GM12878 (cell line): ENCODE measurements at regions of chr9 and their contacts with region 1.

Region 1: GRCh38 chr9:121059998-121060636 is 10.0 kb upstream of the C5 start:
- DNase-seq: no peak
- ATAC-seq: peak; percentile 80
- H3K4me3 ChIP-seq: no peak overlapping the region
- H3K27ac ChIP-seq: no peak overlapping the region
- H3K4me1 ChIP-seq: no peaks in the 10 kb centered on the region
- H3K27me3 ChIP-seq: no peaks in the 10 kb centered on the region
- CTCF ChIP-seq: peak; percentile 63 to 70 (median 68)
- EP300 ChIP-seq: no peak
- POLR2A ChIP-seq: no peak
- RAD21 ChIP-seq: peak; percentile 64

Region 2: DNA sequence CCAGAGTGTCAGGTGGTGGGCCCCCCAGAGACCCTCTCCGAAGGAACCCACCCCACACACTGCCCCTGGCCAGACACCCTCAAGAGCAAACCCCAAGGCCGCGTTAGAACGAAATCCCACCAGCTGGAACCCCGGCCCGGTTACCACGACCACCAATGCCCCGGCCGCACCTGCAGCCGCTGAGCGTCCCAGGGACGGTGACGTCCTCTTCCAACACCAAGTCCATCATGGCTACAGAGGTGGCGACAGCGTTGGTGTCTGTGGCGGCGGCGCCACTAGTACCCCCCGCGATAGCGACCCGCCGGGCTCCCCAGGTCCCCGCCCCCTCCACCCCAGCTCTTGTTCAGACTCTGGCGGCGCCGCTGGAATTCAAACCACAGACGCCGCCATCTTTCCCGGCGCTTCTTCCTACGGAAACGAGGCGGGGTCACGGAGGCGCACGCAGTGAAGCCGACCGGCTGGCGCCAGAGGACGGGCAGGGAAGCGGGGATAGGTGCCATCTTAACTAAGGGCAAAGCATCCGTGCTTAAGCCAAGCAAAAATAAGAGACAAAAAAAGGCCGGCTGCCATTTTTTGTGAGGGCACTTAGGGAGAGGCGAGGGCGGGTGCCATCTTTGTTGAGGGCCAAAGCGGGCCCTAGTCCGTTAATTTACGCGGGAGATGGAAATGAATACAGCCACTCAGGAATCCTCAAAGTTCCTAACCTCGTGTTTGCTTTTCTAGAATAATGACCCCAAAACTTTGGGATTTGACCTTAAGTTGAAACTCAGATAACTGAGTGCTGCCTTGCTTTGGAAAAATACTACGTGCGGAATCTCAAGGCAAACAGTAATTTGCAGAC is 480.1 kb before region 1 on chr9 and contains the start of gene CDK5RAP2:
- CTCF ChIA-PET with region 1: no interaction called
- POLR2A ChIA-PET with region 1: no interaction called
- RAD21 ChIA-PET with region 1: no interaction called
- SMC1A ChIA-PET with region 1: no interaction called
- in situ Hi-C with region 1: no loop called
- intact Hi-C with region 1: no loop called
- DNase-seq: peak; percentile 88
- ATAC-seq: peak; percentile 94
- H3K4me3 ChIP-seq: peak within 1 kb of the TSS; percentile 89
- H3K27ac ChIP-seq: peak within 1 kb of the TSS; percentile 85
- H3K4me1 ChIP-seq: peaks cover 20% of the 10 kb centered on the region
- H3K27me3 ChIP-seq: no peaks in the 10 kb centered on the region
- CTCF ChIP-seq: no peak
- EP300 ChIP-seq: 0 out of 4 replicates have a peak, but pooled peaks of 1 of the 2 experiments have one; percentile 31
- POLR2A ChIP-seq: peak; percentile 71
- RAD21 ChIP-seq: no peak
- polyA plus RNA-seq, gene CDK5RAP2: 16.2 to 16.8 TPM

Region 3: GRCh38 chr9:120742951-120743416 is 317.1 kb before region 1 on chr9:
- CTCF ChIA-PET with region 1: interaction called, 5 read pairs
- POLR2A ChIA-PET with region 1: no interaction called
- RAD21 ChIA-PET with region 1: interaction called, 3 read pairs
- SMC1A ChIA-PET with region 1: interaction called, 3 read pairs
- in situ Hi-C with region 1: no loop called
- intact Hi-C with region 1: loop called (anchors 5 kb)
- DNase-seq: no peak
- ATAC-seq: peak; percentile 93
- H3K4me3 ChIP-seq: no peak overlapping the region
- H3K27ac ChIP-seq: no peak overlapping the region
- H3K4me1 ChIP-seq: no peaks in the 10 kb centered on the region
- H3K27me3 ChIP-seq: no peaks in the 10 kb centered on the region
- CTCF ChIP-seq: peak; percentile 72 to 84 (median 82)
- EP300 ChIP-seq: no peak
- POLR2A ChIP-seq: no peak
- RAD21 ChIP-seq: peak; percentile 76

Region 4: DNA sequence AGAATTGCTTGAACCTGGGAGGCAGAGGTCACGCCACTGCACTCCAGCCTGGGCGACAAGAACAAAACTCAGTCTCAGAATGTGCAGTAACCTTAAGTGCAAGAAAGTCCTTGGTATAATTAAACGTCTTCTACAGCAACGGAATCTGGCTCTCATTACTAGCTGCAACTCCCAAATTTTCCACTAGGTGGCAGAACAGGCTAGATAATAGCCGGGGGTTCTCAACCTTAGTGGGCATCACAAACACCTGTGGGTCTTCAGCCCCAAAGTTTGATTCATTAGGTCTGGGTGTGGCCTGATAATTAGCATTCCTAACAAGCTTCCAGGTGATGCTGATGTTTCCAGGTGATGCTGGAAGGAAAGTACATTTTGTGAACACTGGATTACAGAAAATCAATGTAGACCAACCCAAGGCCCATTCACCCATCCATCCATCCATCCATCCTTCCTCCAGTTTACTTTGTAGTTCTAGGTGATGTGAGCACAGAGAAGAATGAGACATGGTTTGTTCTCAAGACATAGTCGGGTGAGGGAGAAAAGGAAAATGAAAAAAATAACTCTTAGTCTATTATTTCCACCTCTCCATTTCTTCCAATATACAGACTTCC is 304.2 kb before region 1 on chr9:
- CTCF ChIA-PET with region 1: interaction called, 109 read pairs
- POLR2A ChIA-PET with region 1: no interaction called
- RAD21 ChIA-PET with region 1: interaction called, 45 read pairs
- SMC1A ChIA-PET with region 1: interaction called, 73 read pairs
- in situ Hi-C with region 1: loop called (anchors 5 kb)
- intact Hi-C with region 1: loop called (anchors 1 kb)
- DNase-seq: peak; percentile 30
- ATAC-seq: peak; percentile 94
- H3K4me3 ChIP-seq: no peak overlapping the region
- H3K27ac ChIP-seq: no peak overlapping the region
- H3K4me1 ChIP-seq: peaks cover 9% of the 10 kb centered on the region
- H3K27me3 ChIP-seq: no peaks in the 10 kb centered on the region
- CTCF ChIP-seq: peak; percentile 65 to 88 (median 84); a peak in 5 of 6 replicates
- EP300 ChIP-seq: no peak
- POLR2A ChIP-seq: no peak
- RAD21 ChIP-seq: peak; percentile 96

Region 5: DNA sequence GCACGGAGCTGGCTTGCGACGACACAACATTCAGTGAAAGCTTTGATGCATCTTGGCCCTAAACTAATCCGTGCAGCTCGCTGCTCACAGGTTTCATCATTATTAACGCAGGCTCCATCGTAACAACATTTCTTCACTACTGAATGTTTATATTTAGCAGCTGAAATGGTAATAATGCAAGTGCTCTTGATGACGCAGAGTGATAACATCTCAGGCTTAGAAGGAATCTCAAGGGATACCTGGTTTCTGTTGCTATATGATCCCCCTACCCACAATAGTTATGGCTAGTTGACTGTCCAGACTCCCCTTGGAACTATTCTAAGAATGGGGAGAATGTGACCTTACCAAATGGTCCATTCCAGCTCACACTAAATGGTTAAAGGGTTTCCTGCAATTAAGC is 46.2 kb before region 1 on chr9:
- CTCF ChIA-PET with region 1: interaction called, 10 read pairs
- POLR2A ChIA-PET with region 1: no interaction called
- RAD21 ChIA-PET with region 1: no interaction called
- SMC1A ChIA-PET with region 1: interaction called, 4 read pairs
- in situ Hi-C with region 1: no loop called
- intact Hi-C with region 1: no loop called
- DNase-seq: no peak
- ATAC-seq: no peak
- H3K4me3 ChIP-seq: no peak overlapping the region
- H3K27ac ChIP-seq: no peak overlapping the region
- H3K4me1 ChIP-seq: peaks cover 4% of the 10 kb centered on the region
- H3K27me3 ChIP-seq: no peaks in the 10 kb centered on the region
- CTCF ChIP-seq: no peak
- EP300 ChIP-seq: no peak
- POLR2A ChIP-seq: no peak
- RAD21 ChIP-seq: no peak

Region 6: DNA sequence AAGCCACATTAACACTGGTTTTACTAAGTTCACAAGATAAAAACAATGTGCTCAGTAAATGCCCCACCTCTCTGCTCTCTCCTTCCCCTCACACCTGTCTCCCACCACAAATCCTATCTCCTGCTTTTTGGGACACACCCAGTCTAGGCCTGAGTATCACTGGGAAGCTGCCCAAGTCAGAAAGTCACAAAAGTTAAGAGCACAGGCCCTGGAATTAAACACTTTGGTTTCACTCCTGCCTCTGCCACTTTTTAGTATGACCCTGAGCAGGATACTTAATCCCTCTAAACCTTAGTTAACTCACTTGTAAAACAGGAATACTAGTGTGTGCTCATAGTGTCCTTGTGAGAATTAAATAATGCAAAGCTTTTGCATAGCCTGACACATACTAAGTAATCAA is 21.3 kb before region 1 on chr9:
- CTCF ChIA-PET with region 1: interaction called, 49 read pairs
- POLR2A ChIA-PET with region 1: no interaction called
- RAD21 ChIA-PET with region 1: interaction called, 3 read pairs
- SMC1A ChIA-PET with region 1: interaction called, 14 read pairs
- in situ Hi-C with region 1: no loop called
- intact Hi-C with region 1: no loop called
- DNase-seq: no peak
- ATAC-seq: no peak
- H3K4me3 ChIP-seq: no peak overlapping the region
- H3K27ac ChIP-seq: no peak overlapping the region
- H3K4me1 ChIP-seq: no peaks in the 10 kb centered on the region
- H3K27me3 ChIP-seq: no peaks in the 10 kb centered on the region
- CTCF ChIP-seq: no peak
- EP300 ChIP-seq: no peak
- POLR2A ChIP-seq: no peak
- RAD21 ChIP-seq: no peak

Region 7: DNA sequence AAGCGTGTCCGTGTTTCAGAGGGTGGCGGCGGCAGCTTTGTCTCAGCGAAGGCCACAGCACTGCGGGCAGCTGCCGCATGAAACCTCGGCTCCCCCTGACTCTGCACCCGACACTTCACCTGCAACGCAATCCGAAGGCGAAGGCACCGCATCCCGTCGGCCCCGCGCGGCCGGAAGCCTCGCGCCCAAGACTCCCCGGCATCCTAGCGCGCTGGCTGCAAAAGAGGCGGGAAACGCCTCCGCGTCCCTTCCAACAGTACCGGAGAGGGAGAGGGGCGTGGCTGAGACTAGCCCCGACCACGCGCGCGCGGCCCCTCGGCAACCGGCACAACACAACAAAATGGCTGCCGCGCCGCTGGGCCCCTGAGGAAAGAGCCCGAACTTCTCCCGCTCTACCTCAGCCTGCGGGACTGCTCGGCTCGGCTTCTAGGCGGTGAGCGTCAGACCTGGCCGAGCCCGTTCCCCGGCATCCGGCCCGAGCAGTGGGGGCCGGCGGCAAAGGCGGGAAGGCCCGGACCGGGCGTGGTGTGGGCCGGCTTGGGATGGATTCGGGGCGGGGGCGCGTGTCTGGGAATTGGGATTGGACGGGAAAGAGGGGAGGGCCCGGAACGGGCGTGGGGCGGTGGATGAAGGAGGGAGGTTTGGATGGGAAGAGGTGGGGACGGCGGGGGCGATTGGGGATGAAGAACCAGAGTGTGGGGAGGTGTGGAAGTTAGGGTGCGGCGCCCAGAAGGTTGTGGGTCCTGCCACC is 14.7 kb after region 1 on chr9 and contains the start of gene CNTRL:
- CTCF ChIA-PET with region 1: interaction called, 78 read pairs
- POLR2A ChIA-PET with region 1: no interaction called
- RAD21 ChIA-PET with region 1: interaction called, 8 read pairs
- SMC1A ChIA-PET with region 1: interaction called, 13 read pairs
- in situ Hi-C with region 1: no loop called
- intact Hi-C with region 1: no loop called
- DNase-seq: peak; percentile 62
- ATAC-seq: peak; percentile 84
- H3K4me3 ChIP-seq: peak within 1 kb of the TSS; percentile 91
- H3K27ac ChIP-seq: peak within 1 kb of the TSS; percentile 98
- H3K4me1 ChIP-seq: peaks cover 29% of the 10 kb centered on the region
- H3K27me3 ChIP-seq: no peaks in the 10 kb centered on the region
- CTCF ChIP-seq: no peak
- EP300 ChIP-seq: no peak
- POLR2A ChIP-seq: peak; percentile 93
- RAD21 ChIP-seq: no peak
- polyA plus RNA-seq, gene CNTRL: 20.0 to 22.0 TPM

Region 8: GRCh38 chr9:121121582-121122087 is 61.5 kb after region 1 on chr9:
- CTCF ChIA-PET with region 1: interaction called, 11 read pairs
- POLR2A ChIA-PET with region 1: no interaction called
- RAD21 ChIA-PET with region 1: interaction called, 6 read pairs
- SMC1A ChIA-PET with region 1: interaction called, 16 read pairs
- in situ Hi-C with region 1: no loop called
- intact Hi-C with region 1: no loop called
- DNase-seq: peak; percentile 87
- ATAC-seq: peak; percentile 100
- H3K4me3 ChIP-seq: peak overlapping the region; percentile 59
- H3K27ac ChIP-seq: peak overlapping the region; percentile 80
- H3K4me1 ChIP-seq: peaks cover 7% of the 10 kb centered on the region; the same call in 1 of the 2 replicates
- H3K27me3 ChIP-seq: no peaks in the 10 kb centered on the region
- CTCF ChIP-seq: peak in 1 of 3 experiments; percentile 15; a peak in 1 of 6 replicates
- EP300 ChIP-seq: no peak
- POLR2A ChIP-seq: peak; percentile 76
- RAD21 ChIP-seq: no peak; the same call in 1 of the 2 replicates